Psoas muscle (tissue), 8 donors: ENCODE measurements at regions of chr6 and their contacts with region 1.

Region 1: DNA sequence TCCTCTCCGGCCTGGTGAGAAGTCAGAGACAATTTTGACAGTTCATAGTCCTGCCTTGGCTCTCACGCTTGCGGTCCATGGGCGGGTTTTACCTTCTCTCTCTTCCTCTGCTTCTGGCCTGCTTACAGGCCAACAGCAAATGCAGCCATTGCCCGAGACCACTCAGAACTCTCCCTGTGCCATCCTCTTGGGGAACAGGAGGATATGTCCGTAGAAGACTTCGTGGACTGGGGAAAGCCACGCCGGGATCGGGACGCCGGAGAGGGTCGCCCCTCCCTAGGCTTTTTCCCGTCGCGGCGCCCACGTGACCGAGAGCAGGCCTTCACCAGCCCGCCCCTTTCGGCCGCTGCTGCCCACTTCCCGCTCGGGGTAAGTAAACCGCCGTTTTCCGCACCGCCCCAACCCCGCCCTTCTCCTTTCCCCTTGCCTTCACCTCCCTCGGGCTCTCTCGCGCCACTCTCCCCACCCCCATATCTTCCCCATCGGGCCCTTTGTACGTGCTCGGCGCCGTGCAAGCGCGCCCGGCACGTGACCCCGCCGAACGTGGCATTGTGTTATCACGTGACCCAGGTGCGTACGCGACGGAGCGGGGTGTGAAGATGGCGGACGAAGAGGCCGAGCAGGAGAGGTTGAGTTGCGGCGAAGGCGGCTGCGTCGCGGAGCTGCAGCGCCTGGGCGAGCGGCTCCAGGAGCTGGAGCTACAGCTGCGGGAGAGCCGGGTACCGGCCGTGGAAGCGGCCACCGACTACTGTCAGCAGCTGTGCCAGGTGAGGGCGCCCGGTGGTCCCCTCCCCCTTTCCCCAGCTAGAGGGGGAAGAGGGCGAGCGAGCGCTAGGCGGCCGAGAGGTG is at the start of gene ZNF292:
- DNase-seq: peak; percentile 96 to 98
- ATAC-seq: peak; percentile 89 to 92 (median 89)
- H3K4me3 ChIP-seq: peak within 1 kb of the TSS; percentile 99
- H3K27ac ChIP-seq: peak within 1 kb of the TSS; percentile 97
- H3K4me1 ChIP-seq: peaks cover 40% of the 10 kb centered on the region
- H3K27me3 ChIP-seq: no peaks in the 10 kb centered on the region
- CTCF ChIP-seq: no peak
- total RNA-seq, gene ZNF292: 16.7 to 21.3 (median 17.1) TPM

Region 2: GRCh38 chr6:87197547-87197946 is 42.3 kb after region 1 on chr6:
- intact Hi-C with region 1: loop called (anchors 2 to 5 kb)
- DNase-seq: no peak
- ATAC-seq: no peak
- H3K4me3 ChIP-seq: no peak overlapping the region
- H3K27ac ChIP-seq: no peak overlapping the region
- H3K4me1 ChIP-seq: peaks cover 24% of the 10 kb centered on the region
- H3K27me3 ChIP-seq: no peaks in the 10 kb centered on the region
- CTCF ChIP-seq: no peak

Region 3: GRCh38 chr6:87209812-87210211 is 54.6 kb after region 1 on chr6:
- intact Hi-C with region 1: loop called in 1 of 2 experiments (anchors 5 kb)
- DNase-seq: no peak
- ATAC-seq: no peak
- H3K4me3 ChIP-seq: no peak overlapping the region
- H3K27ac ChIP-seq: no peak overlapping the region
- H3K4me1 ChIP-seq: peaks cover 17% of the 10 kb centered on the region
- H3K27me3 ChIP-seq: no peaks in the 10 kb centered on the region
- CTCF ChIP-seq: no peak

Region 4: GRCh38 chr6:87214831-87215230 is 59.6 kb after region 1 on chr6:
- intact Hi-C with region 1: loop called in 1 of 2 experiments (anchors 5 kb)
- DNase-seq: no peak
- ATAC-seq: no peak
- H3K4me3 ChIP-seq: no peak overlapping the region
- H3K27ac ChIP-seq: no peak overlapping the region
- H3K4me1 ChIP-seq: peaks cover under 1% of the 10 kb centered on the region
- H3K27me3 ChIP-seq: no peaks in the 10 kb centered on the region
- CTCF ChIP-seq: no peak

Region 5: DNA sequence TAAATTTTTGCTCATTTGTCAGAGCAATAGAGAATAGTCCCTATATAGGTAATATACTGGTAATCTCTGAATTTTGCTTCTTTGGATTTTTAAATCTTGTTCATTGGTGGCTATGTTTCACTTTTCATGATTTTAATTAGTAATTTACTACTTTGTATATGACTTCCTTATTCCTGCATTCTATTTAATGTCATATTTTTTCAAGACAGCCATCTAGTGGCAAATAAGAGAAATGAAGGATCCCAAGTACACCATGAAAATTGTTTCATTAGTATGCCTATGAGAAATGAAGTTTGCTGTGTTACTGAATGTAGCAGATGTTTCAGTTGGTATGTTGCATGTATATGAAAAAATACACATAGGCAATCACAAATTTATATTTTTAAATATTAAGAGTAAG is 82.6 kb after region 1 on chr6:
- intact Hi-C with region 1: loop called in 1 of 2 experiments (anchors 5 kb)
- DNase-seq: no peak
- ATAC-seq: peak in 1 of 4 donors; percentile 76
- H3K4me3 ChIP-seq: no peak overlapping the region
- H3K27ac ChIP-seq: no peak overlapping the region
- H3K4me1 ChIP-seq: no peaks in the 10 kb centered on the region
- H3K27me3 ChIP-seq: no peaks in the 10 kb centered on the region
- CTCF ChIP-seq: peak; percentile 60

Region 6: GRCh38 chr6:87261534-87261933 is 106.3 kb after region 1 on chr6:
- intact Hi-C with region 1: no loop called
- DNase-seq: no peak
- ATAC-seq: no peak
- H3K4me3 ChIP-seq: no peak overlapping the region
- H3K27ac ChIP-seq: no peak overlapping the region
- H3K4me1 ChIP-seq: no peaks in the 10 kb centered on the region
- H3K27me3 ChIP-seq: no peaks in the 10 kb centered on the region
- CTCF ChIP-seq: no peak